Activated T-helper 2 cell treated with anti-CD3 and anti-CD28 coated beads, Interferon-gamma antibody, Interleukin-2, Interleukin-4, amounts not matched to agents 10 μg/mL and 5 μg/mL and 100 μg/mL, durations not matched to agents 14 hours and 24 hours and 36 hours (primary cell): ENCODE measurements at regions of chr5 and their contacts with region 1.

Region 1: DNA sequence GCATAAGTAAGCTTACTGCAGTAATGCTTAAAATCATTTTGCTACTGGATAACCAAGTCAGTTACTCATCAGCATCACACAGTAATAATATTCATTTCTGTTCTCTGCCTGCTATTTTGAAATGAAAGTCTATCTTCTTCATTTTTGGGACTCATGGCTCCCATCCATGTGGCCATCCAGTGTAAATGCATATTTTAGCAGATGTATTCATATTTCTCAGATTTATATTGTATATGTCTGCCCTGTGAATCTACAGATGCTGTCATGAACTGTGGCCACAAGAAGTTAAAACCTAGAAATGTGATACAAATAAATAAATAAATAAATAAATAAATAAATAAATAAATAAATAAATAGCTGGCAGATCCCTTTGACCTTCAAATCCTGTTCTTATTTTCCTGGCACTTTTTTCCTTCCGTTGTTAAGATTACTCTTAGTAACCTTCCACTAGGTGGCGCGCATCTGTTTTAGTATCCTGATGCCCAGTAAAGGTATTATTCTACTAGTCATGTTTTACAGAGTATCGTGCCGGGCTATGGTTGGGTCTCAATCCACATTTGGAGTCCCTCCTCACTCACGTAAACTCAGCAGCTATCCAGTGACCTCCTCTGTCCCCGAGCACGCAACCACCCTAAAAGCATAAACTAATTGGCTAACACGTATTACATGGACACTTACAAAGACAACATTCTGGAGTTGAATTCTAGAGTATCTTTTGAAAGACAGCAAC is 79.2 kb upstream of the IL7R start:
- DNase-seq: peak; percentile 43
- H3K4me3 Mint-ChIP-seq: no peak overlapping the region
- H3K27ac Mint-ChIP-seq: peak overlapping the region; percentile 66
- H3K4me1 Mint-ChIP-seq: peaks cover 62% of the 10 kb centered on the region
- H3K27me3 Mint-ChIP-seq: no peaks in the 10 kb centered on the region

Region 2: DNA sequence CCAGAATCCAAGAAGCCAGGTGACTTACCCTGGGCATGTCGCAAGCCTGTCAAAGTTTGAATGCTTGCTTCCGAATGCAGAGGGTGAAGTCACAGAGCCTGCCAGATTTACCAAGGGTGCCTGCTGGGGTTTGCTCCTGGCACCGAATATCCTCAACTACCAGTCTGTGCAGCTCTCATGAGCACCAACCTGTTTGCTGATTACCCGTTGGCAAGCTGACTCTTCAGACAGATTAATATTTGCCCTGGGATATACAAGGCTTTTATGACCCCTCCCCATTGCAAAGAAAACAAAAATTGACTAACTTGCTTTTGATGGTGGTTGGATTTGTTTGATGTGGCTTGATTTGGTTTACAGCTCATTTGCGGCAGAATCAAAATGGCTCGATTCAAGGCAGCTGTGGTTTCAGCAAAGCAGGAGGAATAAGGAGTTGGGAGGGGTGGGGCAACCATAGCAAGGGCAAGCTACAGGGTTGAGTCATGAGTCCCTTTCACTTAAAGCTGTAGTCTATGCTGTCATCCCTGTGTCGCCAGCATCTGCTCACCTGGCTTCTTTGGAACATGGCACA is 647.5 kb before region 1 on chr5:
- intact Hi-C with region 1: loop called (anchors 5 kb)
- DNase-seq: peak; percentile 58
- H3K4me3 Mint-ChIP-seq: no peak overlapping the region
- H3K27ac Mint-ChIP-seq: no peak overlapping the region
- H3K4me1 Mint-ChIP-seq: peaks cover 16% of the 10 kb centered on the region
- H3K27me3 Mint-ChIP-seq: peaks cover 45% of the 10 kb centered on the region

Region 3: DNA sequence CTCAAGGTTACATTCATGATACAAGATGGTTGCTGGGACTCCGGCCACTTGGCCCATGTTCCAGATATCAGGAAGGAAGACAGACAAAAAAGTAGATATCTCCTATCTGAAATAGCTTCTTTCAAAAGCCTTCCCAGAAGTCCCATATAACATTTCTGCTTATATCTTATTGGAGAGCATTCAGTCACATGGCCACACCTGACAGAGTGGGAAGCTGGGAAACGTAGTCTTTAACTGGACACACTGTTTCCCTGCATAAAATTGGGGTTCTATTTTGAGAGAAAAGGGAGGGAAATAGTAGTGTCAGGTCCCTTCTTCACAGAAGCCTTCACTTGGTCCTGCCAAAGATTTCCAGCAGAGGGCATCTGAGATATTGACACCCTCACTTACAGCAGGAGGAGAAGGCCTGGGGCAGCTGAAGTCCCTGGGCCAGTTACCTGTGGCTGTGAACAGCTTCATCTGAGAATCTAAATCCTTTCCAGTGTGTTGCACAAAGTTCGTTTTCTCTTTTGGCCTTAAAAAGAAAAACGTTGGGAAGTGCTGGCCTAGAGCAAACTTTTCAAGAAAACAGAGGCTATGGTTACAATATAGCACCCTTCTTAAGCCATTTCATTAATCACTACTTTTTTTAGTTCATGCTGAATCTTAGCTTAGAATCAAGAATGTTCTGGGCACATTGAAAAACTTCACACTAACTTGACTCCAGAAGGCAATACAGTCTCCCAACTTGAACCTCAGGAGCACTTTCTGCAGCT is 126.3 kb before region 1 on chr5:
- intact Hi-C with region 1: loop called (anchors 1 kb)
- DNase-seq: peak; percentile 46
- H3K4me3 Mint-ChIP-seq: no peak overlapping the region
- H3K27ac Mint-ChIP-seq: no peak overlapping the region
- H3K4me1 Mint-ChIP-seq: peaks cover 11% of the 10 kb centered on the region
- H3K27me3 Mint-ChIP-seq: no peaks in the 10 kb centered on the region

Region 4: GRCh38 chr5:35736280-35736679 is 41.2 kb before region 1 on chr5:
- intact Hi-C with region 1: loop called (anchors 2 kb)
- DNase-seq: no peak
- H3K4me3 Mint-ChIP-seq: no peak overlapping the region
- H3K27ac Mint-ChIP-seq: peak overlapping the region; percentile 69
- H3K4me1 Mint-ChIP-seq: peaks cover 22% of the 10 kb centered on the region
- H3K27me3 Mint-ChIP-seq: no peaks in the 10 kb centered on the region

Region 5: GRCh38 chr5:35811108-35811741 is 33.7 kb after region 1 on chr5:
- intact Hi-C with region 1: loop called (anchors 1 kb)
- DNase-seq: no peak
- H3K4me3 Mint-ChIP-seq: peak overlapping the region; percentile 27
- H3K27ac Mint-ChIP-seq: peak overlapping the region; percentile 94
- H3K4me1 Mint-ChIP-seq: peaks cover 47% of the 10 kb centered on the region
- H3K27me3 Mint-ChIP-seq: no peaks in the 10 kb centered on the region

Region 6: GRCh38 chr5:35954175-35954574 is 176.7 kb after region 1 on chr5:
- intact Hi-C with region 1: no loop called
- DNase-seq: no peak
- H3K4me3 Mint-ChIP-seq: no peak overlapping the region
- H3K27ac Mint-ChIP-seq: no peak overlapping the region
- H3K4me1 Mint-ChIP-seq: no peaks in the 10 kb centered on the region
- H3K27me3 Mint-ChIP-seq: peaks cover 37% of the 10 kb centered on the region